Thyroid gland (tissue), 4 donors: ENCODE measurements at regions of chr12 and their contacts with region 1.

Region 1: GRCh38 chr12:59087077-59087673 is 166.9 kb upstream of the LRIG3 start:
- DNase-seq: peak; percentile 13 to 21
- H3K4me3 ChIP-seq: no peak overlapping the region
- H3K27ac ChIP-seq: no peak overlapping the region
- H3K4me1 ChIP-seq: peaks cover 0 to 19% of the 10 kb centered on the region in 2 donors
- H3K27me3 ChIP-seq: no peaks in the 10 kb centered on the region
- CTCF ChIP-seq: peak; percentile 18 to 85 (median 68)
- POLR2A ChIP-seq: no peak

Region 2: GRCh38 chr12:58346032-58346632 is 741.0 kb before region 1 on chr12:
- intact Hi-C with region 1: loop called (anchors 10 kb)
- DNase-seq: no peak
- H3K4me3 ChIP-seq: no peak overlapping the region
- H3K27ac ChIP-seq: no peak overlapping the region
- H3K4me1 ChIP-seq: no peaks in the 10 kb centered on the region
- H3K27me3 ChIP-seq: no peaks in the 10 kb centered on the region
- CTCF ChIP-seq: peak; percentile 63 to 84 (median 75)
- POLR2A ChIP-seq: no peak

Region 3: DNA sequence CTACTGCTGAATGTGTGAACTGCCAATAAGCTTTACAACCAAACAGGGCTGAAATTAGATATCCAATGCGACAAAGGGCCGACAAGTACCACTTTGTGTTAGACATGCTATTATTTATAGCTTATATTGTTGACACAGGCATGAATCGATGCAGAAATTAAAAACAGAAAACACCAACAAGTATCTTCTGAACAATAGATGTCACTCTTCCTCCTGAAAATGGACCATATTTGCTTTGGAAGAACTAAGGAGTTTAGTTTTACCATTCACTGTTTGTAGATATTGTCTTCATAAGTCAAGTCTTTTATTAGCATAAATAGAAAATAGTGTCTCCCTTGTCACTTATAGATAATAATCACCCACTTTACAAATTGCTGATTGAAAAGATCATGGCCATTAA is 253.3 kb before region 1 on chr12:
- intact Hi-C with region 1: loop called (anchors 10 kb)
- DNase-seq: no peak
- H3K4me3 ChIP-seq: no peak overlapping the region
- H3K27ac ChIP-seq: peak overlapping the region in 1 of 3 donors; percentile 14
- H3K4me1 ChIP-seq: no peaks in the 10 kb centered on the region
- H3K27me3 ChIP-seq: no peaks in the 10 kb centered on the region
- CTCF ChIP-seq: peak in 3 of 6 experiments; percentile 29 to 51 (median 40)
- POLR2A ChIP-seq: no peak